ENCODE measurements at regions of chr7 and their contacts with region 1.

Region 1: GRCh38 chr7:33932832-33933468 is 27.6 kb downstream of the BMPER start:
- DNase-seq: peak; percentile 77 to 80
- ATAC-seq: peak; percentile 70 to 94 (median 89)
- H3K4me3 ChIP-seq: peak overlapping the region in 7 of 10 donors; percentile 6 to 44 (median 39)
- H3K27ac ChIP-seq: no peak overlapping the region
- H3K4me1 ChIP-seq: peaks cover 0 to 18% (median 3%) of the 10 kb centered on the region in 9 donors
- H3K27me3 ChIP-seq: peaks cover 0 to 6% (median 0%) of the 10 kb centered on the region in 7 donors
- CTCF ChIP-seq: peak; percentile 92 to 99 (median 96)

Region 2: DNA sequence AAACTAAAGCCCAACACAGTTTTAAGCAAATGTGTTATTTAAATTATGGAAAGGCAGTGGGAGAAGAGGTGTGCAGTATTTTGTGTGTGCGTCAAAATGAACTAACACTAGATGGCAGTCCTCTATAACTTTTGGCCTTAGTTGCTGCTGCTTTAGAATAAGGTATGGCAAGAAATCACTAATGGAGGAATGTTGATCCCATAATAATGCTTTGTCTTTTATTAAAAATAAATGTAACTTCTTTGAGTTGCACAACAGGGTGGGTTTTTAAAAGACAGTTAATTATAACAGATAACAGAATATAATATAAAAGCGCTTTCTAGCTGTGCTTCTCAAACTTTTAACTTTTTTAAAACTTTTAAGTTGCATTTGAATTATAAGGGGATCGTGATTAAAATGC is 747.2 kb before region 1 on chr7:
- intact Hi-C with region 1: loop called in 4 of 10 experiments (anchors 5 to 10 kb)
- DNase-seq: no peak
- ATAC-seq: peak in 1 of 8 donors; percentile 56
- H3K4me3 ChIP-seq: no peak overlapping the region
- H3K27ac ChIP-seq: no peak overlapping the region
- H3K4me1 ChIP-seq: peaks cover 0 to 7% (median under 1%) of the 10 kb centered on the region in 9 donors
- H3K27me3 ChIP-seq: no peaks in the 10 kb centered on the region
- CTCF ChIP-seq: peak; percentile 29 to 72 (median 64)

Region 3: DNA sequence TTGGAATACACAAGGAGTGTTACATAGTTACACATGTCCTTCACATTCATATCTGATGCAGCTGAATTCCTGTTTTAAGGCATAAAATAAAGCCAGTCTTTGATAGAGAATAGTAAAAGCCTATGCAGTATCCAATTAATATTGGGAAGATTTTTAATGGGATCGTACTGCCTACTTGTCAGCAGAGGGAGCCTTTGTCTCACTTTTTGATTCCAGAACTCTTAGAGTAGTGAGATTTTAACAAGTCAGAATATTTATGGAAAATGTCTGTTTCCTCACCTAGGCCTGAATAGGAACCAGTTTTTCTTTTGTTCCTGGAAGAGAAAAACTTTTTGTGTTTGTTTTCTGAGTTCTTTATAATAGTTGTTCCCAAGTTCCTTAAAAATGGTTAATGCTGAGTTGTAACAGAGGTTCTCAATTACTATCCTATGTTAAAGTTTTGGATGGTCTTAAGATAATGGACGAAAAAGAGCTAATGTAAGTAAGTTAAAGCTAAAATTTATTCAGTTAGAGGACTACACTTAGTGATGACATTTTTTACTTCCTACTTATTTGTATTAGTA is 689.5 kb before region 1 on chr7:
- intact Hi-C with region 1: loop called in 8 of 10 experiments (anchors 1 to 10 kb)
- DNase-seq: peak in 1 of 2 donors; percentile 5
- ATAC-seq: peak in 5 of 8 donors; percentile 38 to 70 (median 56)
- H3K4me3 ChIP-seq: no peak overlapping the region
- H3K27ac ChIP-seq: no peak overlapping the region
- H3K4me1 ChIP-seq: no peaks in the 10 kb centered on the region
- H3K27me3 ChIP-seq: no peaks in the 10 kb centered on the region
- CTCF ChIP-seq: peak; percentile 25 to 79 (median 66)

Region 4: DNA sequence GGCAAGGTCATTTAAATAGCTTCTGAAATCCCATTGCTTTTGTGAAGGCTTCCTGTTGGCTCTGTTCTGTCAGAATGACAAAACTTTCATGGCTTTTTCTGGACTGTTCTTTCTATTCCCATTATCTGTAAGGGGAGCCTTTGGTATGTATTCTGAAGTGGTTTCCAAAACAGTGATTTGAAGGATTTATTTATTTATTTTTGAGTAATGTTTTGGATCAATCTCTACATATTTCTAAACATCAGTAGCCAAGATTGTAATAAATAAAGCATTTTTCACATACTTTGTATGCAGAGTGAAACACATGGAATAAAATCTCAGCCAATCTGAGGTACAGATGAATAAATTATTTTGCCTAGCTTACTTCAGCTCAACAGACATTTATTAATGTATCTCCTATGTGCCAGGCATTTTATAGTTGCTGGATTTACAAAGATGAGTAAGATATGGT is 682.5 kb before region 1 on chr7:
- intact Hi-C with region 1: loop called in 3 of 10 experiments (anchors 5 to 10 kb)
- DNase-seq: no peak
- ATAC-seq: peak in 1 of 8 donors; percentile 41
- H3K4me3 ChIP-seq: no peak overlapping the region
- H3K27ac ChIP-seq: no peak overlapping the region
- H3K4me1 ChIP-seq: peaks cover 0 to 10% (median 0%) of the 10 kb centered on the region in 9 donors
- H3K27me3 ChIP-seq: no peaks in the 10 kb centered on the region
- CTCF ChIP-seq: no peak

Region 5: DNA sequence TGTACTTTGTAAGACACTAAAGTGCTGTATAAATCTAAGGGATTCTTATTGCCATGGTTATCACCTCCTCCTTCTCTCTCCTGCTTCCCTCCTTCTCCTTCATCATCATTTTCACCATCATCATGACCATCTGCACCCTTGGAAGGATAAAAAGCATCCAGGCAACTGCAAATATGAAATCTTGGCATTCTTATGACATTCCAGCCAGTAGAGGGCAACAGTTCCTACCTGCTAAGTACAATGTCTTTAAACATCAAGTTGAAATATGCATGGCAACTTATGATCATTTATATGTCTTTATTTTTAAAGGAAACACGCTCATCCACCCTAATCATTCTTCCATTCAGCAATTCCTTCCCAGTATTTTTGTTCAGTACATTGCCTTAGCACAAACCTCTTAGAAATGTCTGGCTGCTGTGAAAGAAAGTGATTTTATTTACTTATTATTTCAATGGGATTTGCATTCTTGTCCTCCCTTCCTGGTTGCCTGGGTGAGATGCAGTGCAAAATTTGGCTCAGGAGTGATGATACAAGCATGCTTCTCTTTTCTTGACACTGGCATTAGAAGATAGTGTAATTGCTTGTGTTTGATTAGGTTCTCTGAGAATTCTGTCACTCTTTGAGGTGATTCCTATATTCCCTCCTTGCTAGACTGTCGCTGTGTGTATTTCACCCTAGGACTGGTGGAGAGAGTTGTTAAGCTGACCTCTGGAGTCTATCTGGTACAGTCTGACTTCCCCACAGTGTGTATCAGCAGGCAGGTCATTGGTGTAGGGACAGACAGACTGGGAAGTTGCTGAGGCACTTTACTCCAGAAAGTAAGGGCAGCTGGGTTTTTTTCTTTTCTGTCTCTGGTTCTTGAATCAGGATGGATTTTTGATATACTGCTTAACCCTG is 216.1 kb before region 1 on chr7:
- intact Hi-C with region 1: loop called in 1 of 10 experiments (anchors 2 kb)
- DNase-seq: no peak
- ATAC-seq: no peak
- H3K4me3 ChIP-seq: no peak overlapping the region
- H3K27ac ChIP-seq: no peak overlapping the region
- H3K4me1 ChIP-seq: peaks cover 0 to 16% (median 10%) of the 10 kb centered on the region in 9 donors
- H3K27me3 ChIP-seq: peaks cover 0 to 3% (median 0%) of the 10 kb centered on the region in 7 donors
- CTCF ChIP-seq: peak; percentile 45 to 78 (median 66)

Region 6: DNA sequence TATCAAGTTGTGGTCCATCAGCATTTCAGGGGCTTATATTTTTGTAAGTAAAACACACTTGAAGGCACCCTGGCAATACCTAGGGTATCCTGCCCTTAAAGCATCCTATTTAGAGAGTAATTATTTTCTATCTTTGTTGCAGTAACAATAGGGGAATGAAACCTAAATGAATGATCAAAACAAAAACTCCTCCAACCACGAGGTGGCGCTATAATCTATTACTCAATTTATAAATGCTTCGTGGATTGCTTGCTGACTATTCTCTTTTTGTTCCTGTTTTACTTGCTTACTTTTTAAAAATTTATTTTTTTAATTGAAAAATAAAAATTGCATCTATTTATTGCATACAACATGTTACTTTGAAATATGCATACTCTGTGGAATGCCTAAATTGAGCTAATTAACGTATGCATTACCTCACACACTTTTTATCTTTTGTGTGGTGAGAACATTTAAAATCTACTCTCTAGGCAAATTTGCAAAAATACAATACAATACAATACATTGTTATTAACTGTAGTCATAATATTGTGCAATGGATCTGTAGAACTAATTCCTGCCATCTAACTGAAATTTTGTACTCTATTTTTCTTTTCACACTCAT is 175.3 kb before region 1 on chr7:
- intact Hi-C with region 1: loop called in 8 of 10 experiments (anchors 1 to 10 kb)
- DNase-seq: peak in 1 of 2 donors; percentile 31
- ATAC-seq: peak in 2 of 8 donors; percentile 18 to 38
- H3K4me3 ChIP-seq: no peak overlapping the region
- H3K27ac ChIP-seq: no peak overlapping the region
- H3K4me1 ChIP-seq: peaks cover 0 to 12% (median 10%) of the 10 kb centered on the region in 9 donors
- H3K27me3 ChIP-seq: no peaks in the 10 kb centered on the region
- CTCF ChIP-seq: peak; percentile 64 to 82 (median 70)

Region 7: DNA sequence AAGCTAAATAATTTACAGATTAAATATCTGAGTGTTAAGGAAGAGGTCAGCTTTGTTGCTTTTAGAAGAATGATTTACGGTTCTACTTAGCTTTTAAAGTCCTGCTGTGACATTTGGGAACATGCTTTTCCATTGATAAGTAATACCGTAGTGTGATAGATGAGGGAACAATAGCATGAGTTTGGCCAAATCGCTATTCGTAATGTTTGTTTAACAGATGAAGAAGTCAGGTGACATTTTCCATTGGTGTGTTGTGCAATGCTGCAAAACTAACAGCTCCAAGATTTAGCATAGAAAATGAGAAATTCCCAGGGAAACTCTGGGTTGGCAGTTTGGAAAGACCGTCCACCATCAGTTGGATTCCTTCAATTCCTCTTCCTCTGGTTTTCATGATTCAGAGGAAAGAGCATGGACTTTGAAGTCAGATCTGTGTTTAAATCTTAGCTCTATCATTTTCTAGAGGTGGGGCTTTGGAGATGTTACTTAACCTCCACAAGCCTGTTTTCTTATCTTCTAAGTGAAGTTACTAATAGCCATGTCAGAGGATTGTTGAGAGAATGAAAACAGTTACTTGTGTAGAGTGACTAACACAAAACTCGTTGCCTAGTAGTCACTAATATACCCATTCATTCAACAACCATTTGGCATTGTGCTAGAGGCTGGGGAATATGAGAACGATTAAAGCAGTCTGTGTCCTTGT is 168.0 kb before region 1 on chr7:
- intact Hi-C with region 1: loop called in 1 of 10 experiments (anchors 2 kb)
- DNase-seq: no peak
- ATAC-seq: peak in 4 of 8 donors; percentile 46 to 53 (median 47)
- H3K4me3 ChIP-seq: no peak overlapping the region
- H3K27ac ChIP-seq: no peak overlapping the region
- H3K4me1 ChIP-seq: peaks cover 0 to 4% (median 0%) of the 10 kb centered on the region in 9 donors
- H3K27me3 ChIP-seq: no peaks in the 10 kb centered on the region
- CTCF ChIP-seq: no peak

Region 8: GRCh38 chr7:33814400-33814799 is 118.5 kb before region 1 on chr7:
- intact Hi-C with region 1: no loop called
- DNase-seq: no peak
- ATAC-seq: peak in 5 of 8 donors; percentile 17 to 60 (median 48)
- H3K4me3 ChIP-seq: peak overlapping the region in 8 of 10 donors; percentile 8 to 48 (median 36)
- H3K27ac ChIP-seq: peak overlapping the region in 9 of 10 donors; percentile 1 to 66 (median 52)
- H3K4me1 ChIP-seq: peaks cover 0 to 21% (median 6%) of the 10 kb centered on the region in 9 donors
- H3K27me3 ChIP-seq: no peaks in the 10 kb centered on the region
- CTCF ChIP-seq: no peak

Region 9: DNA sequence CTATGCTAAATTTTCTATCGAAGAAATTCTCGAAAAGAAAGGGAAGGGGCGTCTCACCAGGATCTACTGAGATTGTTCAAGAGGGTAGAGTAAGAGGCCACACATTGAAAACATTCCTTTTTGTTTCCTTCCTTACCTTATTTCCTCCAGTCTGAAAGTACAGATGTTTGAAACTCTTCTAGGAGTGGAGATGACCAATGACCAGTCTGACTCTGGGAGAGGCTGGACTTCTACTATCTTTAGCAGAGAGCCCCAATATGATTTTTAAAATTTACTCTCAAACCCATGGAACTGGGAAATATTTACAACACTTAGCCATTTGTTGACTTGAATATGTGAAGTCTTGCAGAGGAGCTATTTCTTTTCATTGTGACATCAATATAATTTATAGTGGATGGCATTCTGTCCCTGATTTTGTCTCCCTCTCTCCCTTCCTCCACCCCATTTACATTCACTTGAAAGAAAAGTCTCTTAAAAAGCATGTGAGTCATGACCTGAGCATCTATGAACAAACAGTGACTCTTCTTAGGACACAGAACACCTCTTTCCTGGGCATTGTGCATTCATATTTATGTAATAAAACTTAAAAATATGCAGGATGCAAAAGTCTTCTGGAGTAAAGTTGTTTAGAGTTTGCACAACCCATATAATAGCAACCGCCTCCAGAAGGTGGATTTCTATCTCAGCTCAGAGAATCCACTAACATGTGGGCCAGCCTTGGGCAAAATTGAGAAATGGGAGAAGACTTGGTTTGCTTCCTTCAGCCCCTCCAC is 58.8 kb before region 1 on chr7:
- intact Hi-C with region 1: no loop called
- DNase-seq: no peak
- ATAC-seq: no peak
- H3K4me3 ChIP-seq: no peak overlapping the region
- H3K27ac ChIP-seq: no peak overlapping the region
- H3K4me1 ChIP-seq: peaks cover 0 to 23% (median 0%) of the 10 kb centered on the region in 9 donors
- H3K27me3 ChIP-seq: no peaks in the 10 kb centered on the region
- CTCF ChIP-seq: no peak

Region 10: DNA sequence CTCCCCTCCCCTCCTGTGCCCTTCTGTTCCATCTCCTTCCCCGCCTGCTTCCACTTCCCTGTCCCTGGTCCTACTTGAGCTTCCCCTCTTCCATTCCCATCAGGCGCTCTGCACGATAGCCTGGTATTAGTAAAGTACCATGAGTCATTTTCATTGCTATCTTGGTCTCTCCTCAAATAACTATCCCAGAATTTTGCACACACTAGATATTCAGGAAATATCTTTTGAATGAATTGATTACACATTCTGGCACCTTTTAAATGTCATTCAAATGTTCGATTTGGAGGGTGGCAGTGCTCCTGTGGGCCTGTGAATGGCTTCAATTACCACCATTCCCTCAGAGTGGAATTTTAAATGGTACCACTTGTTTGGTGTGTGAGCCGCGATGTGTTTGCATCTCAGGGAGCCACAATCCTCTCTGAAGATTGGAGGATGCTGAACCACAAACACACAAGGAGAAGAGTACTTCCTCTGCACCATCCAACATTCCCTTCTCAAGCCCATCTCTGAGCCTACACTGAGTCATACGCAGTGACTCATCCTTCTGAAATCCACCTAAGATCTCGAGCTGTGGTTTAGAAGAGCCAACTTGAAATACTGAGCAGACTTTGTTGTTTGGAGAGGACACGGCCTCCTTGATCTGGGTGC is 54.1 kb after region 1 on chr7:
- intact Hi-C with region 1: no loop called
- DNase-seq: no peak
- ATAC-seq: peak in 5 of 8 donors; percentile 53 to 90 (median 72)
- H3K4me3 ChIP-seq: no peak overlapping the region
- H3K27ac ChIP-seq: no peak overlapping the region
- H3K4me1 ChIP-seq: peaks cover 0 to 2% (median 0%) of the 10 kb centered on the region in 9 donors
- H3K27me3 ChIP-seq: no peaks in the 10 kb centered on the region
- CTCF ChIP-seq: no peak